ENCODE measurements at regions of chr19 and their contacts with region 1.

Region 1: DNA sequence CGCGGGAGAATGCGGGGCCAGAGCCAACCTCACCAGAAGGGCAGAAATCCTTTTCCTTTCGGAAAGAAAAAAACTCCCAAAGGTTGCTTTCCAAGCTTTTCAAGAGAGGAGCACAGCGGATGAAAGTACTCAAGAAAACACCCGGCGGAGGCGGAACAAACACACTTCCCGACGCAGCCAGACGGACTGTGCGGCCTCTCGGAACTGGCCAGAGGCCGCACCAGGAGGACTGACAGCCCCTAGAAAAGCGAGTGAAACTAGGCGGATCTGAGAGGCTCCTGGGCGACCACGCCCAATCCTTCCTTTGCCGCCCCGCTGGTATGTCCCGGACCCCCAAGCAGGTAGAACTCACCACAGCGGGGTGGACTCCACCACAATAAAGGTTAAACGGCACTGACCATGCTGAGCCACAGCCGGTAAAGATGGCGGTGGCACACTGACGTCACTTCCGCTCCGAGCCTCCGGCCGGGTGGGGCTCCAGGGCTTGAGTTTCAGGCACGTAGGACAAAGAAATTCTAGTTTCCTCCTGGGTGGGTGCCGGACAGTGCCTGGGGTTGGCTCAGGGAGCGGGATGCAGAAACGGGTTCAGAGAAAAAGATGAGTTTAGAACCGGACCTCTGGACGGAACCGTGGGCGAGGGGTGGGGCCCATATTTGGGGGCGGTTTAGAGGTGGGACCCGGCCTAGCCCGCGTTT is at the start of gene ZNF562:
- DNase-seq: peak; percentile 86
- ATAC-seq: peak; percentile 98
- H3K4me3 ChIP-seq: peak within 1 kb of the TSS; percentile 81
- H3K27ac ChIP-seq: peak within 1 kb of the TSS; percentile 92
- H3K4me1 ChIP-seq: no peaks in the 10 kb centered on the region
- H3K27me3 ChIP-seq: no peaks in the 10 kb centered on the region
- CTCF ChIP-seq: no peak
- POLR2A ChIP-seq: peak; percentile 84
- RAD21 ChIP-seq: no peak
- total RNA-seq, gene ZNF562: 41.7 and 43.7 TPM in 2 replicates

Region 2: DNA sequence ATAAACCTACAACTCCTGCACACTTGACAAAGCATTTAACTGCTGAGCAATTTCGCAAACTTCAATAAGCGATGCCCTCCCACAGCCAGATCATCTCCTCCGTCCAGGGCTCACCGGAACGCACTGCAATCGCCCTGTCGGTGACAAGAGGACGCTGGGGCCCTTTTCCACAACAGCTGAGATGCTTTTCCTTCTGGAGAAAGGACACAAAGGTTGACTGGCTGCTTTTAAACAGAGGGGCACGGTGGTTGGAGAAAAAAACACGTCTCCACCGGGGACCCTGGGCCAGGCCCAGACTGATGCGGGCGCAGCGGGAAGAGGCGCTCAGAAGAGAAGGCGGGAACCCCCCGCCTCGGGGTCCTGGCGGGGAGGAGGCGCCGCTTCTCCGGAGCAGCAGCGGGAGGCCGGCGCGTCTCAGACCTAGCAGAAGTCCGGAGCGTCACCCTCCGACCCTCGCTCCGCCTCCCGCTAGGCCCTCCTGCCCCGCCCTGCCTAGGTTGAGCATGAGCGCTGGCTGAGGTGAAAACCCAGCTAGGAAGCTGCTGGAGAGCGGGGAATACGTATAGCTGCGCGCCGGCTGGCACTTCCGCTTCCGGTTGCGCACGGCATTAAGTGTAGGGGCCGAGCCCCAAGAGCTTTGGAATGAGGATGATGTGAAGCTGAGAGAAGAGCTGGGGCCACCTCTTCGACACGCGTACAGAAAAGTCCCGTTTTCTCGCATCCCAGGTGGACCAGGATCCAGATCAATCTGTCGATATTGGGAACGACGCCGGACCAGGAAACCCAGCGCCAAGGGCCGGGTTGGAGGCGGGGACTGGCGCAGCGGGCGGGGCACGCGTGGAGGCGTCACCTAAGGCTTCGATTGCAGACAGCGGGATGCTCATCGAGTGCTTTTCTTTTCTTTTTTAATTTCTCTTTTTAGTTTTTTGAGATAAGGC is 93.6 kb after region 1 on chr19 and contains the start of gene ZNF846:
- CTCF ChIA-PET with region 1: no interaction called
- POLR2A ChIA-PET with region 1: no interaction called
- dilution Hi-C with region 1: no loop called
- in situ Hi-C with region 1: no loop called
- intact Hi-C with region 1: loop called (anchors 1 kb)
- DNase-seq: peak; percentile 96
- ATAC-seq: peak; percentile 98
- H3K4me3 ChIP-seq: peak within 1 kb of the TSS; percentile 83
- H3K27ac ChIP-seq: peak within 1 kb of the TSS; percentile 94
- H3K4me1 ChIP-seq: no peaks in the 10 kb centered on the region
- H3K27me3 ChIP-seq: no peaks in the 10 kb centered on the region
- CTCF ChIP-seq: no peak
- POLR2A ChIP-seq: peak; percentile 19; the same call in 1 of the 2 replicates
- RAD21 ChIP-seq: no peak
- total RNA-seq, gene ZNF846: 5.3 and 6.5 TPM in 2 replicates